Right ventricle myocardium inferior (tissue), 1 donor: ENCODE measurements at regions of chr14 and their contacts with region 1.

Region 1: GRCh38 chr14:90399541-90400444 is 3.0 kb downstream of the CALM1 start:
- DNase-seq: peak; percentile 95
- ATAC-seq: peak; percentile 73

Region 2: DNA sequence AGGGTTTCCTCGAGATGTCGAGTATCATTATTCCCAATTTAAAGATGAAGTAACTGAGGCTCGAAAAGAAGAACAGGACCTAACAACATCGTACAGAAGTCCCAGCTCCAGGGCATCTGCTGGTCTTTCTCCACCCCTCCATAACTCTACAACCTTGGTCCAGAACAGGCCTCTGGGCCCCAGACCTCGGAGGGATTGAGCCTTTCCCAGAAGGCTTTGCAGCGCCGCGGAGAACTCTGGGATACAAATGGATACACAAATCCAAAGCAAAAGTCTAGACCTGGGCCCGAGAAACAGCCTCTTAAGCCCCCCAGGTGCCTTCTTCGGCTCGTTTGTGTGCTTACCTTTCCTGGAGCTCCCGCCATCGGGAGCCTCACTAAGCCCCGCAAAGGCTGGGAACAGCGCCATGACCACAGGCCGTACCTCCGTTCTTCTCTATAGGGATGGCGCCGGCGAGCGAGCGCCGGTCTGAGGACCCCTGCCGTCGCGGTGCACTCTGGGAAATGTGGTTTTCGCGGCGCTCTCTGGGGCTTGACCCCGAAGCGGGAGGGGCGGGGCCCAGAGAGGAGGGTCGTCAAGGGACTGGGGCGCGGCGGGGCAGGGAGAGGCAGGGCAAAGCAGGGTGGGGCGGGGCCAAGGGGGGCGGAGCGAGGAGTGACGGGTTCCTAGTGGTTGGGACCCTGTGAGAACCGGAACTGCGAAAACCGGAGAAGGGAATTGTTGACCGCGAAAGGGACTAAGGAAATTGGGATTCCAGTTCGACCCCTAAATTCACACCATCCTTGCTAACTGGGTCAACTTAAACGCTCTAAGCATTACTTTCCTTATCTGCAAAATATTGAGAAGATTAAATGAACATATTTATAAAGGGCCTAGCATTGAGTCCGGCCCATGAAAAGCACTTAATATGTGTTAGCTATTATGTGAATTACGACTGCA is 68.0 kb before region 1 on chr14 and contains the start of gene NRDE2:
- intact Hi-C with region 1: loop called (anchors 5 kb)
- DNase-seq: peak; percentile 100
- ATAC-seq: peak; percentile 100
- total RNA-seq, gene NRDE2: 11.2 TPM

Region 3: DNA sequence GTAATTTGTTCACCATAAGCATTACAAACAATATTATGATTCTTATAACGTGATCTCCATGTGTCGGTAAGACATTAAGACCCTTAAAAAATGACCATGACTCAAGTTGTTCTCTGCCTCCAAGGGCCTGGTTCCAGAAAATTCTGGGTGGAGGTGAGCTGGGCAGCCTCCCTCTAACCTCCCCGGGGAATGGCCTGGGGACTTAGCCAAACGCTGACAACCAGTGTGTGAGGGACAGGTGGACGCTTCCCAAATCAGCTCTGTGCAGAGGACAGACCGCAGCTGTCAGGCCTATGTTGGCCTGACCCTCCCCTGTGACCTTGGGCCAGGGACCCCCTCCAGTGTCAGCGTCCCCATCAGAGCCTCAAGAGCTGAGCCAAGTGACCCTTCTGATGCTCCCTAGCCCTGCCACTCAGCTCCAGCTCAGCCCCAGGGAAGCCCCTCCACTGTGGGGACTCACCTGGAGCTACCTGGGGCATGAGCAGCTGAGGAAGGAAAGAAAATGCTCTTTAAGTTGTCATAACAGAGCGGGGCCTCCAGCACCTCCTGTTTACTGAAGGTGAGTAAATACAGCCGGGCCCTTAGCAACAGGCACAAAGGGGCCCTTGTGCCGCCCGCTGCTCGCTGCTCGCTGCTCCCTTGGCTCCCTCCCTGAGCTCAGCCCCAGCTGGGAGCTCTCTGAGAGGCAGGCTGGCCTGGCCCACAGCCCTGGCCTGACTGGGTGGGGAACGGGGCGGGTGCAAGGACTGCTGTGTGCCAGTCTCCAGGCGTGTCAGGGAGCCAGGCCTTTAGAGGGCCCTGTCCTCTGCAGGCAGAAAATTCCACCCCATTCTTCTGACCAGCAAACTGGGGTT is 113.6 kb after region 1 on chr14:
- intact Hi-C with region 1: loop called (anchors 5 kb)
- DNase-seq: peak; percentile 91
- ATAC-seq: peak; percentile 91

Region 4: DNA sequence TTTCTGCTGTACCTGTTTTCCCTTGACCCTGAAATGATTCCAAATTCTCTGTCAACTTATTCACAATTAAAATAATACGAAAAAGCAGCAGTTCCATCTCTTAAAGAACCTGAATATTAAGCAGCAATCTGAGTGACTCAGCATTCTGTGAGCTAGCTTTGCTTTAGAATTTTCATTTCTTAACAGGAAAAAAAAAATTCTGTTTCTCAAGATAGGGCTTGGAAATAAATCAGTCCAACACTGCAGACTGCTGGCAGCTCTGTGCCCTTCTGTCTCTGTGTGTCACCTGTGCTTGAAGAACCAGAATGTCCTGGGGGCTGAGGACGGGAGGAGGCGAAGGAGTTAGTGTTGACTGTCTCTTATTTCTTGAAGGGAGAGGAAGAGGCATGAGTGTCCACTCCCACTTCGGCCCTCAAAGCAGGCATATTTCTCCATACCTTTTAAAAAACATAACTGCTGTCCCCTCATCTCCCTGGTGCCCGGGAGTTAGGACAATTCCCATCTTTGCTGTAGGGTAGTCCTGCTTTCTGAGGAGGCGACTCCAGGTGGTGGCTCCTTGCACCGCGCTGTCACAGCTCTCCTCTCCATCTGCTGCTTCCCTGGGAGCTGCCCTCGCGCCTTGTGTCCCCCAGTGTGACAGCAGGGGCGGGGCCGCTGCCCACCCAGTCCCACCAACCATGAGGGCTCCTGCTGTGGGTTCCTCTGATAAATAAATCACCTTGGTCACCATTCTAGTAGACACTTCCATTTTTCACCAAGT is 200.1 kb after region 1 on chr14:
- intact Hi-C with region 1: loop called (anchors 5 kb)
- DNase-seq: no peak
- ATAC-seq: peak; percentile 51